WTC11 (cell line): ENCODE measurements at regions of chr14 and their contacts with region 1.

Region 1: GRCh38 chr14:74349757-74350156 is 1.5 kb downstream of the VRTN start:
- DNase-seq: no peak
- ATAC-seq: no peak
- H3K4me3 Mint-ChIP-seq: peak overlapping the region; percentile 93
- H3K27ac Mint-ChIP-seq: peak overlapping the region; percentile 85
- H3K4me1 Mint-ChIP-seq: peaks cover 50% of the 10 kb centered on the region
- H3K27me3 Mint-ChIP-seq: no peaks in the 10 kb centered on the region
- CTCF ChIP-seq: no peak

Region 2: DNA sequence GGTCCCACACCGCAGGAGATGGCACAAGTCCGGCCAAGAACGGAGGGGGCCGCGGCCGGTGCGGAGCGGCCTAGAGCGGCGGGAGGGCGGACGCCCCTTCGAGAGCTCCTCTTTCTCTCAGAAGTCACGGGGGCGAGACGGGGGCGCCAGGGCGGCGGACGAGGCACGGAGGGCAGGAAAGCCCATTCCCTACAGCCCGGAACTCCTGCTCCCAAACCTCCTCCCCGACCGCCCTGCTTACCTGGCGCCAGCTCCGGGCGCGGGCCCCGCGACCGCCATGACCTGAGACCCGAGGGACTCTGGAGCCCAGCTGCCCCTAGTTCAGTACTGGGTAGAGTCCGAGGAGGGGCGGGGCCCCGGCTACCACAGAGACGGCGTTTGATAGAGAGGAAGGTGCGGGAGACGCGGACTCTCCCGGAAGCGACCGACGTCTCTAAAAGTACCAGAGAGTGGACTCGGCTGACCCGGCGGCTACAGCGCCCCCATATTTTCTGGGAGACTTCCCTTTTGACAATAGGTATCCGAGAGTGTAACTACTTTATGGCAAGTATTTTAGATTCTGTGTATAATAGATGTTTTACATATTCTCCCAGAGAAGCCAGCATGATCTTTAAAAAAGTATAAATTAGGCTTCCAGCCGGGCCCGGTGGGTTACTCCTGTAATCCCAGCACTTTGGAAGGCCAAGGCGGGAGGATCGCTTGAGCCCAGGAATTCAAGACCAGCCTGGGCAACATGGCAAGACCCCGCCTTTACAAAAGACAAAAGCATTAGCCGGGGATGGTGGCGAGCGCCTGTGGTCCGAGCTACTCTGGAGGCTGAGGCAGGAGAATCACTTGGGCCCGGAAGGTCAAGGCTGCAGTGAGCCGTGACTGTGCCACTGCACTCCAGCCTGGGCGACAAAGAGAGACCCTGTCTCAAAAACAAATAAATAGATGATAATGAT is 46.9 kb before region 1 on chr14 and contains the start of gene ABCD4:
- CTCF ChIA-PET with region 1: interaction called, 14 read pairs
- POLR2A ChIA-PET with region 1: interaction called, 5 read pairs
- DNase-seq: peak; percentile 99
- ATAC-seq: peak; percentile 99
- H3K4me3 Mint-ChIP-seq: peak within 1 kb of the TSS; percentile 96
- H3K27ac Mint-ChIP-seq: peak within 1 kb of the TSS; percentile 98
- H3K4me1 Mint-ChIP-seq: peaks cover 7% of the 10 kb centered on the region
- H3K27me3 Mint-ChIP-seq: no peaks in the 10 kb centered on the region
- CTCF ChIP-seq: no peak
- total RNA-seq, gene ABCD4: 84.7 to 91.2 TPM (median 90.2 TPM) in 3 replicates

Region 3: GRCh38 chr14:74380156-74380555 is 30.4 kb after region 1 on chr14:
- CTCF ChIA-PET with region 1: no interaction called
- POLR2A ChIA-PET with region 1: no interaction called
- DNase-seq: no peak
- ATAC-seq: no peak
- H3K4me3 Mint-ChIP-seq: no peak overlapping the region
- H3K27ac Mint-ChIP-seq: no peak overlapping the region
- H3K4me1 Mint-ChIP-seq: no peaks in the 10 kb centered on the region
- H3K27me3 Mint-ChIP-seq: no peaks in the 10 kb centered on the region
- CTCF ChIP-seq: no peak